ENCODE measurements at regions of chr7 and their contacts with region 1.

Region 1: GRCh38 chr7:50206453-50207250 is 97.9 kb upstream of the IKZF1 start:
- DNase-seq: peak; percentile 77
- H3K4me3 Mint-ChIP-seq: peak overlapping the region; percentile 48
- H3K27ac Mint-ChIP-seq: peak overlapping the region; percentile 93
- H3K4me1 Mint-ChIP-seq: peaks cover 86% of the 10 kb centered on the region
- H3K27me3 Mint-ChIP-seq: no peaks in the 10 kb centered on the region

Region 2: GRCh38 chr7:49927631-49928030 is 279.0 kb before region 1 on chr7:
- CTCF ChIA-PET with region 1: no interaction called
- POLR2A ChIA-PET with region 1: no interaction called
- DNase-seq: no peak
- H3K4me3 Mint-ChIP-seq: no peak overlapping the region
- H3K27ac Mint-ChIP-seq: no peak overlapping the region
- H3K4me1 Mint-ChIP-seq: no peaks in the 10 kb centered on the region
- H3K27me3 Mint-ChIP-seq: no peaks in the 10 kb centered on the region

Region 3: GRCh38 chr7:50068961-50069551 is 137.6 kb before region 1 on chr7:
- CTCF ChIA-PET with region 1: no interaction called
- POLR2A ChIA-PET with region 1: no interaction called
- DNase-seq: no peak
- H3K4me3 Mint-ChIP-seq: peak overlapping the region; percentile 70
- H3K27ac Mint-ChIP-seq: no peak overlapping the region
- H3K4me1 Mint-ChIP-seq: peaks cover 20% of the 10 kb centered on the region
- H3K27me3 Mint-ChIP-seq: peaks cover 20% of the 10 kb centered on the region

Region 4: DNA sequence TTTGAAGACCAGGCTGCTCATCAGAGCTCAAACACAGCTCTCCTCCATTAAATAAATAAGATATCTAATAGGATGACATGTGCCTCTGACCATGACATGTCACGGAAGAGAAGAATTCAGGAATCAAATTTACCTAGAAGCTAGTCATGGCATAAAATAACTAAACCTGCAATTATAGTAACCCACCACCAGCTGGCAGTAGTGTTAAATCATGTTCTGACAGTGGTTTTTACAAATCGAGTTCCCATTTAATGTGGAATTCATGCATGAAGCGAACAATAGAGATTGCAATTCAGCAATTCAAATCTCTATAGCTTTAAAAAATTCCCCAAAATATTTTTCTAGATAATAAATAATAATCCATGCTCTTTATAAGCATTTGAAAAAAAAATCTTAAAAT is 23.3 kb after region 1 on chr7:
- CTCF ChIA-PET with region 1: interaction called, 32 read pairs
- POLR2A ChIA-PET with region 1: interaction called, 22 read pairs
- DNase-seq: no peak
- H3K4me3 Mint-ChIP-seq: no peak overlapping the region
- H3K27ac Mint-ChIP-seq: no peak overlapping the region
- H3K4me1 Mint-ChIP-seq: peaks cover 42% of the 10 kb centered on the region
- H3K27me3 Mint-ChIP-seq: no peaks in the 10 kb centered on the region

Region 5: DNA sequence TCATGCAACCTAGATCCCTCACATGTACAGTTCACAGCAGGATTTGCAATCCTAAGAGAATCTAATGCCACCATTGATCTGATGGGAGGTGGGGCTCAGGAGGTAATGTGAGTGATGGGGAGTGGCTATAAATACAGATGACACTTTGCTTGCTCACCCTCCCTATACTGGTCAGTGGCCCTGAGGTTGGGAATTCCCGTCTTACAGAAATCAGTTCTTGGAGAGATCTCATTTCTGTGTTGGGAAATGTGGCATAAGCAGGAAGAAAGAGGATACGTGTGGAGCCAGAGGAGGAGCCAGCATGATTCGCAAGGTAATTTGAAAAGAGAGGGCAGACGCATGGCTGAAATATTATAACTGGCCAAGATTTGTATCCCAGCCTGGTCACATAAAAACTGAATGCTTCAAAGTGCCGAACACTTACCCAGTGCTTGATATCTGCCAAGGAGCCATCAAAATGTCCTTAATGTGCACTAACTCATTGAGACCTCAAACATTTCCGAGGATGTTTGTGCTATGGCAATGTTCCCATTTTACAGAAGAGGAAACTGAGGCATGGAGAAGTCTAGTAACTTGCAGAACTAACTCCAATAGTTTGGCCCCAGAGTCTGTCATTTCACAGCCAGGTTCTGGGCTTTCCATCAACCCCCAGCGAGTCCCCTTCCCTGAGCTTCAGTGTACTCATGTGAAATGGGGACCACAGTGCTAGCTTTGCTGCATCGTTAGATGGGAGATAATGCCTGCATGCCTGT is 92.3 kb after region 1 on chr7:
- CTCF ChIA-PET with region 1: interaction called, 12 read pairs
- POLR2A ChIA-PET with region 1: interaction called, 367 read pairs
- DNase-seq: no peak
- H3K4me3 Mint-ChIP-seq: no peak overlapping the region
- H3K27ac Mint-ChIP-seq: no peak overlapping the region
- H3K4me1 Mint-ChIP-seq: peaks cover 25% of the 10 kb centered on the region
- H3K27me3 Mint-ChIP-seq: peaks cover 33% of the 10 kb centered on the region

Region 6: DNA sequence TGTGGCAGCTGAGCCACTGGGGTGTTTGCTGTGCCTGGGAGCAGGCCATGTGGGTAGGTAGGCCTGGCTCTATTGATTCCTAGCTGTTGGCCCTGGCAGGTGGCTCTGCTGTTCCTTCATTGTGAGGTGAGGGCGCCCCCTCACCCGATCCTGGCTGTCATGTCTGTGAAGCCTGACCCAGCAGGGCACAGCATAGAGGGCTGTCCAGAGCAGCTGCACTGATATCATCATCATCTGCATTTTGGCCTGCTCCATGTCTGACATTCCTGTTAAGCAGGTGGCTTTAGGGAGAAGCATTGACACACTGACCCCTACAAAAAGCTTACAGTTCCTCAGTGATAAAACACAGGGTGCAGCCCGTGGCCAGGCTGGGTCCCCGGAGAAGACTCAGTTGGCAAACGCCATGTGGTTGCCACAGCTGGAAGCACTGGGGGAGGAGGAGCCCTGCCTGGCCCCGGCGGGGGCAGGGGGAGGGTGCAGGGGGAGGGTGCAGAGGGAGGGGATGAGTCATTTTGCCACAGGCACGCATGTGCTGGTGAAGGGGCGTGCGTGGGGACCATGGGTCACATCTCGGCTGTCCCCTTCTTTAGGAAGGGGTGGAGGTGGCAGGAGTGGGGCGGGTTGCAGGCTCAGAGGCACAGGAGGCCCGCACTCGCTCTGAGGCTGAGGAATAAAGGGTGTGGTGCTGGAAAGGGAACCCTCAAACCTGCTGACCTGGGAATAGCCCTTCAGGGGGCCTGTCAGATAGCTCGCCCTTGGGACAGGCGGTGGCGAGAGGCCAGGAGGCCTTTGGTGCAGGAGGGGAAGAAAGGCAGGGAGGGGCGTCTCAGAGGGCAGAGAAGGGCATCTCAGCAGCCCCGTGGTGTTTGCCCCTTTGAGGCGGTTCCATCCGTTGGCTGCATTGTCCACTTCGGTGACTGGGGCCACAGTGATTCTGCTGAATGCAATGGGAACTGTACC is 129.4 kb after region 1 on chr7:
- CTCF ChIA-PET with region 1: interaction called, 24 read pairs
- POLR2A ChIA-PET with region 1: interaction called, 22 read pairs
- DNase-seq: peak; percentile 87
- H3K4me3 Mint-ChIP-seq: no peak overlapping the region
- H3K27ac Mint-ChIP-seq: no peak overlapping the region
- H3K4me1 Mint-ChIP-seq: no peaks in the 10 kb centered on the region
- H3K27me3 Mint-ChIP-seq: no peaks in the 10 kb centered on the region

Region 7: GRCh38 chr7:50369143-50370026 is 162.7 kb after region 1 on chr7:
- CTCF ChIA-PET with region 1: interaction called, 95 read pairs
- POLR2A ChIA-PET with region 1: interaction called, 158 read pairs
- DNase-seq: peak; percentile 56
- H3K4me3 Mint-ChIP-seq: no peak overlapping the region
- H3K27ac Mint-ChIP-seq: peak overlapping the region; percentile 82
- H3K4me1 Mint-ChIP-seq: peaks cover 96% of the 10 kb centered on the region
- H3K27me3 Mint-ChIP-seq: no peaks in the 10 kb centered on the region